Calu3 (cell line): ENCODE measurements at regions of chr7 and their contacts with region 1.

Region 1: DNA sequence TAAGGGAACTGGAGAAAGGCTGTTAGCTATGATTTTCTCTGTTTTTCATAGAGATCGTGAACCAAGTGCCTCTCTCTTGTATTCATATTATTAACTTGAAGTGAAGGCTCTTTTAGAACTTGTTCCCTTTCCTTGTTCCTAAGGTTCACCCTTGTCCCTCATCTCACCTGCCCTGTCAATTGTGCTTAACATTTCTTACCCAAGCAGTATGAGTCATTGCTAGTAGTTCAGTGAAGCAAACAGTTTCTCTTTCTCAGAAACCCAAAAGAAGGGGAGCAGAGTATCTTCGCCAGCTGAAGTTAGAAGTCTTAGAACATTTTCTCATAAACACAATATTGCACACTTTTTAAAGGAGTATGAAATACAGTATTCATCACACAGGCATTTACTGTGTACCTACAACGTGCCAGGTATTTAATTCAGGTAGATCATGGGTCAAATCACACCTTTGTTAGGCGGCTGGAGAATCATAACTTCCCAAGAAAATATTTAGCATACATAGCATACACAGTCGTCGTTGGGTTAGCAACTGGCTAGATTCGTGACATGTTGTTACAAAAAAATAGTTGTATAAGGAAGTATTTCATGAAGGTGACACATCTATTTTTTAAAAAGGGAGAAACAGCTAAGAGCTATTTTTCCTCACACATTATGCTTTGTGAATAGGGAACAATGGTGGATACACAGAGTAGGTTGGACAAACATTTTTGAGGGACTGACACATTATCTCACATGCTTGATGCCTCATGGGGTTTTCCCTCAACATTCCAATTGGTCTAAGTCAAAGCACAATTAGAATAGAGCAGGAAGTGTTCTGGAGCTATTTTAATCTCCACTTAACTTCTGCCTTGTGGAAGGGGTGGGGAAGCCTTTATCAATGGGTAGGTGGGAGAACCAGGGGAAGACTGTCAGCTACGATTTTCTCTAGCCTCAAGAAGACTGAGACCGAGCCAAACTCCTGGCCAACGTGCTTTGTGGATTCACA is 13.2 kb downstream of the HDAC9 start:
- DNase-seq: peak; percentile 83
- H3K4me3 Mint-ChIP-seq: peak overlapping the region; percentile 74
- H3K27ac Mint-ChIP-seq: peak overlapping the region; percentile 98
- H3K4me1 Mint-ChIP-seq: peaks cover 57% of the 10 kb centered on the region
- H3K27me3 Mint-ChIP-seq: no peaks in the 10 kb centered on the region
- CTCF ChIP-seq: no peak

Region 2: GRCh38 chr7:18191341-18191740 is 317.4 kb before region 1 on chr7:
- CTCF ChIA-PET with region 1: no interaction called
- intact Hi-C with region 1: no loop called
- DNase-seq: no peak
- H3K4me3 Mint-ChIP-seq: no peak overlapping the region
- H3K27ac Mint-ChIP-seq: peak overlapping the region; percentile 64
- H3K4me1 Mint-ChIP-seq: peaks cover 25% of the 10 kb centered on the region
- H3K27me3 Mint-ChIP-seq: no peaks in the 10 kb centered on the region
- CTCF ChIP-seq: no peak

Region 3: GRCh38 chr7:18458830-18459229 is 49.9 kb before region 1 on chr7:
- CTCF ChIA-PET with region 1: interaction called, 10 read pairs
- intact Hi-C with region 1: no loop called
- DNase-seq: peak; percentile 71
- H3K4me3 Mint-ChIP-seq: peak overlapping the region; percentile 51
- H3K27ac Mint-ChIP-seq: peak overlapping the region; percentile 80
- H3K4me1 Mint-ChIP-seq: peaks cover 31% of the 10 kb centered on the region
- H3K27me3 Mint-ChIP-seq: no peaks in the 10 kb centered on the region
- CTCF ChIP-seq: no peak

Region 4: DNA sequence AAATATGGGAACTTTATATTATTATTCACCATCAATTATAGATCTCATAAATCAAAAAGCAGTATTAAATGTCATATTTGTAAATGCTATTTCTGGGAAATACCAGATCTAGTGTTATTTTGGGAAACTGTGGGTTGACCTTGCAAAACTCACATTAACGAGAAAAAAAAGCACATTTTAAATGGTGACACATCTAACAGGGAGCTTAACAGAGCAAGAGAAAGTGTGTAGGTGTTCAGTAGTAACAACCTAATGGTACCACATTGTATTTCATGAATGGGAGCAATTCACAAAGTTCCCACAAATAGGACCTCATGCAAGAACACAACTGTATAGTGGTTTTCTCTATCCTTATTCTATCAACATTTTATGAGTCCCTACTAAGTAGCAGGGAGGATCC is 39.4 kb before region 1 on chr7:
- CTCF ChIA-PET with region 1: no interaction called
- intact Hi-C with region 1: no loop called
- DNase-seq: no peak
- H3K4me3 Mint-ChIP-seq: no peak overlapping the region
- H3K27ac Mint-ChIP-seq: no peak overlapping the region
- H3K4me1 Mint-ChIP-seq: peaks cover 28% of the 10 kb centered on the region
- H3K27me3 Mint-ChIP-seq: no peaks in the 10 kb centered on the region
- CTCF ChIP-seq: no peak

Region 5: DNA sequence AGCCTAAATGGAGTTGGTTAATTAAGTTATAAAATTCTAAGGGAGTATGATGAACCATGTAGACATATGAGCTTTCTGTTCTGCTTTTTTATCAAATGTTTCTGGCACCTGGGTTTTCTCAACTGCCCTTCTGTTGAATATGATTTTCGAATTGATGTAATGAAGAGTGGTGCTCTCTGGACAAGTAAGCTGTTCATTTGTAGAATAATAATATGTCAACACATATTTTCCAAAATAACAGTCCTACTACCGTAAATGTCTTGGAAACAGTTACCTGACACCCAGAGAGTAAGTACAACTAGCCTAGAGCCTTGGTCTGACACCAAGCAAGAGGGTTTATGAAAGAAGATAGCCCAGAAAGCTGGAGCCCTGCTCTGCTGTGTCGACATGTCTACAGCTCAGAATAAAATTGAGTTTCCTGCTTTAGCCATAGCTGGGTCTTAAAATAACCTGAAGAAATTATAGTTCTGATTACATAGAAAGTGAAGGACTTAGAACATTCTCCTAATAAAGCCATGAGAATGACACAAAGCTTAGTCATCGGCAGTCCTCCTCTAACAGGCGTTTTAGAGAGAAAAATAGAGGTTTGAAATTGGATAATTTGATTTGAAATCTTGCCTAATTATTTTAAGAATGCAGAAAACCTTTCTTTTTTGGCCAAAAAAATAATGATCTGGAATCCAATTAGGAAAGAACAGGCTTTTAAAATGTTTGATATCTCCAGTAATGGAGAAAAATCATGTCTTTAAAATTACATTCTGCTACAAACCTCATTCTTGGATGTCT is 11.9 kb after region 1 on chr7:
- CTCF ChIA-PET with region 1: interaction called, 12 read pairs
- intact Hi-C with region 1: no loop called
- DNase-seq: no peak
- H3K4me3 Mint-ChIP-seq: peak overlapping the region; percentile 38
- H3K27ac Mint-ChIP-seq: peak overlapping the region; percentile 85
- H3K4me1 Mint-ChIP-seq: peaks cover 69% of the 10 kb centered on the region
- H3K27me3 Mint-ChIP-seq: no peaks in the 10 kb centered on the region
- CTCF ChIP-seq: no peak

Region 6: DNA sequence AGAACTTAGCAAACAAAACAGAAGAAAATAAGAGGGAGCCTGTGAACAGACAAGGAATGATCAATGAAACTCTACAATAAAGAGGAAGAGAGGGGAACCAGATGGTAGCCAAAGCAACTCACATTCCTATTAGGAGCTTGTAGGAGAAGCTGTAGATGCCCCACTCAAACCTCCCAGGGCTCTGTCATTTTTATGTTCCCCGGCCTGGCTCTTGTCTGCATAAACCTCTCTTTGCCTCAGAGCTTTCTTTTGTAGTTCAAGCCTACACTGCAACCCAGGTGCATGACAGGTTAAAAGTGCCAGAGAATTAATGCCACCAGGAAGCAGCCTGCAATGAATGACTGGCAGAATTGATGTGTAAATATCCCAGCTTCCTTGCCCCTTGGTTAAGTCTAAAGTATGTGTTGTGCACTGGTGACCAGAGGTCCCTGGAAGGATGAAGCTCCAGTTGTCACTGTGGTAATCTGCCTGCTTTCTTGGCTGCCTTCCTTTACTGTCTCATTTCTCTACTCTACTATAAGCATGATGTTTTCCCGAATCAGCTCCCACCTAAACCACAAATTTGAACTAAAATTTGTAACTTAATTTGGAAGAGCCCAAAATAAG is 27.2 kb after region 1 on chr7:
- CTCF ChIA-PET with region 1: interaction called, 14 read pairs
- intact Hi-C with region 1: no loop called
- DNase-seq: peak; percentile 25
- H3K4me3 Mint-ChIP-seq: no peak overlapping the region
- H3K27ac Mint-ChIP-seq: peak overlapping the region; percentile 9
- H3K4me1 Mint-ChIP-seq: peaks cover 66% of the 10 kb centered on the region
- H3K27me3 Mint-ChIP-seq: no peaks in the 10 kb centered on the region
- CTCF ChIP-seq: no peak

Region 7: DNA sequence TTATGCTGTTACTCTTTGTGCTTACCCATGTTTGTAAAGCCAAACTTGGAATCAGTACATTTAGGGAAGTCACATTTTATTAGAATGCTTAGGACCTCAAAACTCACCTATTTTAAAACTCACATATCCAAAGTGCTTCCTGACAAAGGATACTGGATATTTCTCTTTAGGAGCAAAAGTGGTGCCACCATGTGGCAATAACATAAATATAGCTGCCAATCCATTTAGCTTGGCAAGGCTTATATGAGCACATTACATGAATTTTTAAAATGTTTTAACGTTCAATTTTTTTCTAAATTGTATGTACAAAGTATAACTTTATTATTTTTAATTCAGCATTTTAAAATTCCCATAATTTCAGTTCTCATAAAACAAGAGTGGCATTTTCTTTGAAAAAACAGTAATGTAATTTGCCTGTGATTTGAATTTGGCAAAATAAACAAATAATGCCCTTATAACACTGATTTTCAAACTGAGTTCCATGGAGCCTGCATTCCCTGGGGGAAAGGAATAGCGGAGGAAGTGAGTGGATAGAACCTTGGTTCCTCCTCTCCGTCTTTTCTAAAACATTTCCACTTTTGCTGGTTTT is 62.2 kb after region 1 on chr7:
- CTCF ChIA-PET with region 1: interaction called, 13 read pairs
- intact Hi-C with region 1: loop called (anchors 2 kb)
- DNase-seq: peak; percentile 41
- H3K4me3 Mint-ChIP-seq: no peak overlapping the region
- H3K27ac Mint-ChIP-seq: peak overlapping the region; percentile 54
- H3K4me1 Mint-ChIP-seq: peaks cover 27% of the 10 kb centered on the region
- H3K27me3 Mint-ChIP-seq: no peaks in the 10 kb centered on the region
- CTCF ChIP-seq: peak; percentile 55

Region 8: GRCh38 chr7:18590744-18591340 is 82.1 kb after region 1 on chr7:
- CTCF ChIA-PET with region 1: no interaction called
- intact Hi-C with region 1: no loop called
- DNase-seq: no peak
- H3K4me3 Mint-ChIP-seq: no peak overlapping the region
- H3K27ac Mint-ChIP-seq: no peak overlapping the region
- H3K4me1 Mint-ChIP-seq: no peaks in the 10 kb centered on the region
- H3K27me3 Mint-ChIP-seq: no peaks in the 10 kb centered on the region
- CTCF ChIP-seq: peak; percentile 34